MCF 10A (cell line): ENCODE measurements at regions of chr1 and their contacts with region 1.

Region 1: GRCh38 chr1:176119549-176119948 is 87.5 kb downstream of the COP1 start:
- DNase-seq: peak; percentile 47
- H3K4me3 Mint-ChIP-seq: no peak overlapping the region
- H3K27ac Mint-ChIP-seq: no peak overlapping the region
- H3K4me1 Mint-ChIP-seq: peaks cover 6% of the 10 kb centered on the region
- H3K27me3 Mint-ChIP-seq: no peaks in the 10 kb centered on the region
- CTCF ChIP-seq: peak; percentile 36

Region 2: GRCh38 chr1:176058686-176059085 is 60.9 kb before region 1 on chr1:
- CTCF ChIA-PET with region 1: no interaction called
- POLR2A ChIA-PET with region 1: no interaction called
- intact Hi-C with region 1: no loop called
- DNase-seq: no peak
- H3K4me3 Mint-ChIP-seq: no peak overlapping the region
- H3K27ac Mint-ChIP-seq: no peak overlapping the region
- H3K4me1 Mint-ChIP-seq: no peaks in the 10 kb centered on the region
- H3K27me3 Mint-ChIP-seq: no peaks in the 10 kb centered on the region
- CTCF ChIP-seq: no peak

Region 3: GRCh38 chr1:176134666-176135065 is 15.1 kb after region 1 on chr1:
- CTCF ChIA-PET with region 1: interaction called, 11 read pairs
- POLR2A ChIA-PET with region 1: interaction called, 3 read pairs
- intact Hi-C with region 1: no loop called
- DNase-seq: no peak
- H3K4me3 Mint-ChIP-seq: no peak overlapping the region
- H3K27ac Mint-ChIP-seq: no peak overlapping the region
- H3K4me1 Mint-ChIP-seq: peaks cover 5% of the 10 kb centered on the region
- H3K27me3 Mint-ChIP-seq: no peaks in the 10 kb centered on the region
- CTCF ChIP-seq: no peak